ENCODE measurements at regions of chr22 and their contacts with region 1.

Region 1: GRCh38 chr22:46791201-46791731 is 28.8 kb downstream of the TBC1D22A start:
- H3K4me3 Mint-ChIP-seq: peak overlapping the region; percentile 40
- H3K27ac Mint-ChIP-seq: peak overlapping the region; percentile 84
- H3K4me1 Mint-ChIP-seq: peaks cover 51% of the 10 kb centered on the region
- H3K27me3 Mint-ChIP-seq: no peaks in the 10 kb centered on the region

Region 2: GRCh38 chr22:46693634-46694415 is 97.4 kb before region 1 on chr22:
- intact Hi-C with region 1: no loop called
- H3K4me3 Mint-ChIP-seq: no peak overlapping the region
- H3K27ac Mint-ChIP-seq: no peak overlapping the region
- H3K4me1 Mint-ChIP-seq: peaks cover 5% of the 10 kb centered on the region
- H3K27me3 Mint-ChIP-seq: no peaks in the 10 kb centered on the region

Region 3: DNA sequence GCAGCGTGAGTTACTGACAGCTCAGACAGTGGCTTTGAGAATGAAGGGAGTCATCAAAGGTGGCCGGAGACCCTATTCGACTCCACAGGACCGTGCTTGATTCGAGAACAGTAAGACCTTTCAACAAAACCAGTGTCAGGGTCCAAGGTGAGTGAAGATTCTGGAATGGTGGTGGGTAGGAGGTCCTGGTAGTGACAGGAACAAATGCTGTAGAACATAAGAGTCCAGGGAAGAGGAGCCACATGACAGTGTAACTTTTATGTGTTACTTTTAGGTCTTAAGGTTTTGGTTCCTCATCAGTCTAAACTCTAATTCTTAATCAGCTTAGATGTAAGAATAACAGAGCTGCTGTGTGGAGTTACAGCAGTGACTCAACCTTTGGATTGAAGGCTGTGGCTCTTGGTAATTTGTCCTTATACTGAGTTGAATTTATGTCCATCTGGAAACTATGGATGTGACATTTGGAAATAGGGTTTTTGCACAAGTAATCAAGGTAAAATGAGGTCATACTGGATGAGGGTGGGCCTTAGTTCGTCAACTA is 27.1 kb before region 1 on chr22:
- intact Hi-C with region 1: loop called (anchors 2 kb)
- H3K4me3 Mint-ChIP-seq: peak overlapping the region; percentile 95
- H3K27ac Mint-ChIP-seq: peak overlapping the region; percentile 89
- H3K4me1 Mint-ChIP-seq: peaks cover 78% of the 10 kb centered on the region
- H3K27me3 Mint-ChIP-seq: no peaks in the 10 kb centered on the region

Region 4: DNA sequence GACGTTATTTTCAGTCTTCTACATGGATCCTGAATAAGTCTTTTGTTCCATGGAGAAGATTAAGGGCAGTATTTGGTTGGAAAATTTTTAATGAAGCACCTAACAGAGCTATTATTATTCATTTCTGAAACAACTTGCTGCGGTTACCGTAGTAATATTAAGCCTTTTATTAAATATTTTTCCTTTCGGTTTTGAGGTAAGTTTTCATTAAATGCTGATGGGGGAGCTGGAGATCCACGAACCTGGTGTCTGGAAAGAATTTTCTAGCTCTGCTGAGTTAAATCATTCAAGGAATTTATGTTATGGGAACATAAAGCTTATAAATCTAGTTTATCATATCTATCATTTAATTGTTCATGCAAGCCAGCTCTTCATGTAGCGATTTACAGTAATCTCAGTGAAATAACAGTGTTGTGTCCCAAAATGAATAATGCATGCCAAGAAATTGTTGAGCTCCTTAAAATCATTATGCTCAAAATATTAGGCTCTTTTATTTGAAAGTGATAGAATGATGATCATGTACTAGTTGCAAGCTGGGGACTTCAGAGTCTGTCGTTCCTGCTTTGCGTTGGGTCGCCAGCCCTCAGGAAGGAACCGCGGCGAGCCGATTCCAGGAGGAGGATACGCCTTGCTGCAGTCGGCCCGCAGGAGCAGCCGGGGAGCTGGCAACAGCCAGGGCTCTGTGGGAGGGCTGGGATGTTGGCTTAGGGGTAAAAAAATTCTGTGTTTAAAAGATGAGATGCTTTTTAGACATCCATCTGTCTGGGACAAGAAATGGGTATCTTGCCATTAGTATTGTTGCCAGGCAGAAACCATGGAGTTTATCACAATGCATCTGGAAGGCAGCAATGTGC is 54.3 kb after region 1 on chr22:
- intact Hi-C with region 1: loop called (anchors 10 kb)
- H3K4me3 Mint-ChIP-seq: no peak overlapping the region
- H3K27ac Mint-ChIP-seq: no peak overlapping the region
- H3K4me1 Mint-ChIP-seq: peaks cover 33% of the 10 kb centered on the region
- H3K27me3 Mint-ChIP-seq: no peaks in the 10 kb centered on the region

Region 5: GRCh38 chr22:46934746-46935491 is 143.7 kb after region 1 on chr22:
- intact Hi-C with region 1: no loop called
- H3K4me3 Mint-ChIP-seq: no peak overlapping the region
- H3K27ac Mint-ChIP-seq: peak overlapping the region; percentile 55
- H3K4me1 Mint-ChIP-seq: peaks cover 43% of the 10 kb centered on the region
- H3K27me3 Mint-ChIP-seq: no peaks in the 10 kb centered on the region